ENCODE measurements at regions of chr4 and their contacts with region 1.

Region 1: GRCh38 chr4:118278473-118279274 is 74.1 kb downstream of the PRSS12 start:
- DNase-seq: peak; percentile 96 to 99 (median 98)
- ATAC-seq: peak; percentile 97
- H3K4me3 ChIP-seq: peak overlapping the region; percentile 69 to 79
- H3K4me3 Mint-ChIP-seq: peak overlapping the region; percentile 94
- H3K27ac ChIP-seq: peak overlapping the region; percentile 95 to 96
- H3K27ac Mint-ChIP-seq: peak overlapping the region; percentile 99
- H3K4me1 ChIP-seq: peaks cover 29% of the 10 kb centered on the region
- H3K4me1 Mint-ChIP-seq: peaks cover 59% of the 10 kb centered on the region
- H3K27me3 ChIP-seq: no peaks in the 10 kb centered on the region
- H3K27me3 Mint-ChIP-seq: no peaks in the 10 kb centered on the region
- CTCF ChIP-seq: no peak

Region 2: GRCh38 chr4:118249890-118250289 is 28.8 kb before region 1 on chr4:
- CTCF ChIA-PET with region 1: no interaction called
- POLR2A ChIA-PET with region 1: no interaction called
- intact Hi-C with region 1: no loop called
- DNase-seq: no peak
- ATAC-seq: no peak
- H3K4me3 ChIP-seq: no peak overlapping the region
- H3K4me3 Mint-ChIP-seq: no peak overlapping the region
- H3K27ac ChIP-seq: no peak overlapping the region
- H3K27ac Mint-ChIP-seq: no peak overlapping the region
- H3K4me1 ChIP-seq: no peaks in the 10 kb centered on the region
- H3K4me1 Mint-ChIP-seq: peaks cover 3% of the 10 kb centered on the region
- H3K27me3 ChIP-seq: no peaks in the 10 kb centered on the region
- H3K27me3 Mint-ChIP-seq: no peaks in the 10 kb centered on the region
- CTCF ChIP-seq: no peak

Region 3: GRCh38 chr4:118352843-118353533 is 74.3 kb after region 1 on chr4 and contains the start of gene PRSS12:
- CTCF ChIA-PET with region 1: interaction called, 3 read pairs
- POLR2A ChIA-PET with region 1: no interaction called
- intact Hi-C with region 1: loop called (anchors 1 to 2 kb)
- DNase-seq: peak; percentile 10 to 61 (median 37)
- ATAC-seq: peak; percentile 84
- H3K4me3 ChIP-seq: peak within 1 kb of the TSS in 1 of 2 experiments; percentile 35
- H3K4me3 Mint-ChIP-seq: peak within 1 kb of the TSS; percentile 76
- H3K27ac ChIP-seq: no peak within 1 kb of the TSS
- H3K27ac Mint-ChIP-seq: no peak within 1 kb of the TSS
- H3K4me1 ChIP-seq: peaks cover 11% of the 10 kb centered on the region
- H3K4me1 Mint-ChIP-seq: peaks cover 16% of the 10 kb centered on the region
- H3K27me3 ChIP-seq: peaks cover 18 to 28% of the 10 kb centered on the region in 2 experiments
- H3K27me3 Mint-ChIP-seq: peaks cover 74% of the 10 kb centered on the region
- CTCF ChIP-seq: peak; percentile 27
- total RNA-seq, gene PRSS12: not detected

Region 4: GRCh38 chr4:118367872-118368271 is 89.2 kb after region 1 on chr4:
- CTCF ChIA-PET with region 1: no interaction called
- POLR2A ChIA-PET with region 1: no interaction called
- intact Hi-C with region 1: no loop called
- DNase-seq: no peak
- ATAC-seq: no peak
- H3K4me3 ChIP-seq: no peak overlapping the region
- H3K4me3 Mint-ChIP-seq: no peak overlapping the region
- H3K27ac ChIP-seq: no peak overlapping the region
- H3K27ac Mint-ChIP-seq: no peak overlapping the region
- H3K4me1 ChIP-seq: no peaks in the 10 kb centered on the region
- H3K4me1 Mint-ChIP-seq: no peaks in the 10 kb centered on the region
- H3K27me3 ChIP-seq: no peaks in the 10 kb centered on the region
- H3K27me3 Mint-ChIP-seq: peaks cover 23% of the 10 kb centered on the region
- CTCF ChIP-seq: no peak

Region 5: DNA sequence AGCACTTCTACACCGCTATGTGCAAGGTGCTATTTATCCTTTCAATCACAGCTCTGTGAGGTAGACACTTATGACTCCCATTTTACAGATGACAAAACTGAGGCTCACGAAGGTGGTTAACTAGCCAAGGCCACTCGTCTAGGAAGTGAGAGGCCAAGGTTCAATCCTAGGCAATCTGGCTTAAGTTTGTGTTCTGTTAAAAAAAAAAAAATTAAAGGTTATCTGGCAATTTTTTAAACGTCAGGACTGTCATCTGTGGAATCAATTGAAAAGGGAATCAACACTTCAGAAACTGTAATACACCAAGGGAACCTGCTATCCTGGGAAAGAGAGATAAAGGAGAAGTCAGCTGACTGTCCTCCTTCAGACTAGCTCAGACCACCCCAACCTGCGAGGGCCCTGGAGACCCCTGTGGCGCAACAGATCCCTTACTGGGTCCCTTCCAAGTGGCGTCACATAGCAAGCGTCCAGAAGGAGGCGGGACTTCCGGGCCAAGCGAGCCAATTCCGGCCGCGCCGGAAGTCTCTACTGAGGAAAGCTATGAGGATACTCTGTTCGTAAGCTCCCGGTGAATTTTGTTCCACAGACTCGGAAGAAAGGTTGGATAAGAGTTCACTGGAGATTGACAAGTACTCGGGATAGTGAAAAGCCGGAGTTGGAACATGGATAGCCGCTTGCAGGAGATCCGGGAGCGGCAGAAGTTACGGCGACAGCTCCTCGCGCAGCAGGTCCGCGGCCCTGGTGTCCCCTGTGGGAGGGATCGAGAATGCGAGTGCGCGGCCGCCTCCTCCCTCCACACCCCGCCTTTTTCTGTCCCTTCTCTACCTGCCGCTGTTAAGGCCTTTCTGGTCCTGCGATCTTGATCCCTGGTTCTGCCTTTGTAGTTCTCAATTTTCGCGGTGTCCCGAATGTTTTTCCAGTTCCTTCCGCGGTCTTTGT is 406.5 kb after region 1 on chr4 and contains the start of gene METTL14:
- CTCF ChIA-PET with region 1: no interaction called
- POLR2A ChIA-PET with region 1: no interaction called
- intact Hi-C with region 1: loop called (anchors 1 to 5 kb)
- DNase-seq: peak; percentile 71 to 92 (median 85)
- ATAC-seq: peak; percentile 91
- H3K4me3 ChIP-seq: peak within 1 kb of the TSS; percentile 86 to 88
- H3K4me3 Mint-ChIP-seq: peak within 1 kb of the TSS; percentile 92
- H3K27ac ChIP-seq: peak within 1 kb of the TSS; percentile 84 to 94
- H3K27ac Mint-ChIP-seq: peak within 1 kb of the TSS; percentile 98
- H3K4me1 ChIP-seq: peaks cover 15% of the 10 kb centered on the region
- H3K4me1 Mint-ChIP-seq: peaks cover 35% of the 10 kb centered on the region
- H3K27me3 ChIP-seq: no peaks in the 10 kb centered on the region
- H3K27me3 Mint-ChIP-seq: no peaks in the 10 kb centered on the region
- CTCF ChIP-seq: no peak
- total RNA-seq, gene METTL14: 68.8 to 70.2 TPM

Region 6: DNA sequence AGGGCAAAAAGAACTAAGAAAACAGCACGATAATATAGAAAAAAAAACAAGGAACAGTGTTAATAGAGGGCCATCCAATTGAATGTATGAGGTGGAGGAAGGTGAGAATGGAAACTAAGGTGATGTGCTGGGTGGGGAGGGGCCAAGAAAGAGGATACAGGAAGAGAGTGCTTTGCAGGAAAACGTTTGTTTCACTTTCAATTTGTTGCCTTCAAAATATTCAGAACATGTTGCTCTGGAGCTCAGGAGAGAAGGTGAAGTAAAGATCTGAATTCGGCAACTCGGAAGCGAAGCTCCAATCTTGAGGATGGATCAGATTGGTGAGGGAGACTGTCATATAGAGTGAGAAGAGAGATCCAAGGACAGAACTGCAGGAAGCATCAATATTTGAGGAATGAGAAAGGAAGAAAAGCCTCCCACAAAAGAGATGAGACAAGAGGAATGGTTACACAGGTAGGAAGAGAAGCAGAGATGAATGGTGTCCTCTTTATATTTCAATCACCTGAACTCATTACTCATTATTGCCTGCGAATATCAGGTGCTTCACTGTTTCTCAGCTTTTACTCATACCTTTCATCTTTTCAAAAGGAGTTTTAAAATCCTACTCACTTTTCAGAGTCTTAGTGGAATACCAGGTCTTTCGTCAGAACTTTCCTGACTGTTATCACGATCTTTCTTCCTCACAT is 572.0 kb after region 1 on chr4:
- CTCF ChIA-PET with region 1: no interaction called
- POLR2A ChIA-PET with region 1: no interaction called
- intact Hi-C with region 1: loop called in 1 of 2 experiments (anchors 5 kb)
- DNase-seq: peak in 6 of 9 experiments; percentile 36 to 78 (median 48)
- ATAC-seq: peak; percentile 95
- H3K4me3 ChIP-seq: peak overlapping the region; percentile 55 to 63
- H3K4me3 Mint-ChIP-seq: peak overlapping the region; percentile 92
- H3K27ac ChIP-seq: peak overlapping the region; percentile 48 to 80
- H3K27ac Mint-ChIP-seq: peak overlapping the region; percentile 96
- H3K4me1 ChIP-seq: peaks cover 7% of the 10 kb centered on the region
- H3K4me1 Mint-ChIP-seq: peaks cover 35% of the 10 kb centered on the region
- H3K27me3 ChIP-seq: no peaks in the 10 kb centered on the region
- H3K27me3 Mint-ChIP-seq: peaks cover 10% of the 10 kb centered on the region
- CTCF ChIP-seq: no peak

Region 7: DNA sequence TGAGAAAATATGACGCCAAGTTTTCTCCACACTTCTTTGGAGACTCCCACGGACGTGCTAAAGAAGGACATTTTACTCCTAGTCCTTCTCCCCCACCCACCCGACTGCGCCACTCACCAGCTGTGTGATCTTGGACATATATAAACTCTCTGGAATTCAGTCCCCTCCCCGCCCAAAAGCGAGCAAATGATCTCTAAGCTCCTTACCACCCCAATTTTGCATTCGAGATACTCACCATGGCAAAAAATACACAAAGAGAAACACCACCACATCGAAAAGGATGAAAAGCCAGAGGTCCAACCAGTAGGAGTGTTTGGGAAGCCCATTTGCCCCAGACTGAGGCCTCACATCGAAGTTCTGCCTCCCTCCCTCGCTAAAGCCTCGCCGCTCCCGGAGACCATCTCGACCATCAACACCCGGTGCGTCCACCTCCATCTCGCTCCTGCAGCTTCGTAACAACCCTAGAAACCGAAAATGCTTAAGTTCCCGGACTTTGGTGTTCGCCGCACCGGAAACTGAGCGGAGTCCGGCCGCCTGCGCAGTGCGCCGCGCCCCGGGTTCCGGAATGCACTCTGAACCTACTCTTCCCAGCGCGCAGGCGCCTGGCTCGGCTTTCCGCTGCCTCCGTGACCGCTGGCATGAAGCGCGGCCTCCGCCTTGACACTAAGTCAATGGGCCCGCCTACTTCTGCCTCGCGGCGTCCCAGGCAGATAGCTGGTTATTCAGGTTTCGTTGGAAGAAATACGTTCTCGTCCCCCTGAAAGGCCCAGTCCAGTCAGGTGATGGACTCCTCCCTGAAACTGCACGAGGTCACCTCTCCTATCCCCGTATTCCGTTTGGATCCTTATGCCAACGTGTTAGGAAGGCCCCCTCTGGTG is 1021.7 kb after region 1 on chr4:
- CTCF ChIA-PET with region 1: no interaction called
- POLR2A ChIA-PET with region 1: no interaction called
- intact Hi-C with region 1: loop called (anchors 2 to 10 kb)
- DNase-seq: peak; percentile 79 to 95 (median 89)
- ATAC-seq: peak; percentile 94
- H3K4me3 ChIP-seq: peak overlapping the region; percentile 92 to 97
- H3K4me3 Mint-ChIP-seq: peak overlapping the region; percentile 99
- H3K27ac ChIP-seq: peak overlapping the region; percentile 93 to 95
- H3K27ac Mint-ChIP-seq: peak overlapping the region; percentile 99
- H3K4me1 ChIP-seq: peaks cover 20% of the 10 kb centered on the region
- H3K4me1 Mint-ChIP-seq: peaks cover 35% of the 10 kb centered on the region
- H3K27me3 ChIP-seq: no peaks in the 10 kb centered on the region
- H3K27me3 Mint-ChIP-seq: no peaks in the 10 kb centered on the region
- CTCF ChIP-seq: no peak

Region 8: DNA sequence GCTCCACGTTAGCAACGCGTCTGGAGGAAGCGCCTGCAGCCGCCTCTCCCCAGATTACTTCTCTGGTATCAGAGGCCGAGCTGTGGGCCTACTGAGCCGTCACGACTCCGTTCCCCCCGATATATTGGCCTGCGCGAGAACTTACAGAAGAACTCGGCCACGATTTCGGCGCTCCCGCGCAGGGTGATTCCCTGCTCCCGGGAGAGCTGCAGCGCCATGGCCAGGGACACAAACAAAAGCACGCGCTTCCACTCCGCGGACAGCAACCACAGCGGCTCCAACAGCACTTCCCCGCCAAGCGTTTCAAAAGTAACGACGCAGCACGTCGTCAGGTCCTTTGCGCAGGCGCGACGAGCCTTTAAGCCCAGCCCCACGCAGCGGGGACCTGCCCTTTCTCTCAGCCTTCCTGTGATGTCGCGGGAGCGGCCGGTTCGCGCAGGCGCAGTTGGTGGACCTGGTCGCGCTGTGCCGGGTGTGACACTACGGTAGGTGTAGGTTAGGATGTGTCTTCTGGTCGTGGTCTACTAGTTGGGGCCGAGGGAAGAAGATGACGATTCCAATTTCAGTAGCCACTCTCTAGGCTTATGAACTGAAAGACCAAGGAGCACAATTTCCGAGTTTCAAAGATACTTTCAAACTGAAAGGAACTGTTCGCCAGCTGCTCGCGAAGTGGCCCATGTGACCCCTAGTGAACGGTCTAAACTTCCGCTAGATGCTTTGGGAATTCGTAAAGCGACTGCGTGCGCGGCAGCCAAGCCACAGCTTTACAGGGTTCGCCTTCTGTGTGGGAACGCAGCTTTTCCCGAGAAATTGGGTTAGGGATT is 1788.1 kb after region 1 on chr4 and contains the start of gene MAD2L1:
- CTCF ChIA-PET with region 1: no interaction called
- POLR2A ChIA-PET with region 1: no interaction called
- intact Hi-C with region 1: loop called in 1 of 2 experiments (anchors 1 kb)
- DNase-seq: peak; percentile 96 to 100 (median 99)
- ATAC-seq: peak; percentile 89
- H3K4me3 ChIP-seq: peak within 1 kb of the TSS; percentile 53 to 84
- H3K4me3 Mint-ChIP-seq: peak within 1 kb of the TSS; percentile 96
- H3K27ac ChIP-seq: peak within 1 kb of the TSS; percentile 79 to 96
- H3K27ac Mint-ChIP-seq: peak within 1 kb of the TSS; percentile 98
- H3K4me1 ChIP-seq: peaks cover 17% of the 10 kb centered on the region
- H3K4me1 Mint-ChIP-seq: peaks cover 66% of the 10 kb centered on the region
- H3K27me3 ChIP-seq: no peaks in the 10 kb centered on the region
- H3K27me3 Mint-ChIP-seq: no peaks in the 10 kb centered on the region
- CTCF ChIP-seq: no peak
- total RNA-seq, gene MAD2L1: 7.4 to 9.1 TPM

Measured in CD8-positive, alpha-beta T cell (primary cell).